ENCODE measurements at regions of chr13 and their contacts with region 1.

Region 1: DNA sequence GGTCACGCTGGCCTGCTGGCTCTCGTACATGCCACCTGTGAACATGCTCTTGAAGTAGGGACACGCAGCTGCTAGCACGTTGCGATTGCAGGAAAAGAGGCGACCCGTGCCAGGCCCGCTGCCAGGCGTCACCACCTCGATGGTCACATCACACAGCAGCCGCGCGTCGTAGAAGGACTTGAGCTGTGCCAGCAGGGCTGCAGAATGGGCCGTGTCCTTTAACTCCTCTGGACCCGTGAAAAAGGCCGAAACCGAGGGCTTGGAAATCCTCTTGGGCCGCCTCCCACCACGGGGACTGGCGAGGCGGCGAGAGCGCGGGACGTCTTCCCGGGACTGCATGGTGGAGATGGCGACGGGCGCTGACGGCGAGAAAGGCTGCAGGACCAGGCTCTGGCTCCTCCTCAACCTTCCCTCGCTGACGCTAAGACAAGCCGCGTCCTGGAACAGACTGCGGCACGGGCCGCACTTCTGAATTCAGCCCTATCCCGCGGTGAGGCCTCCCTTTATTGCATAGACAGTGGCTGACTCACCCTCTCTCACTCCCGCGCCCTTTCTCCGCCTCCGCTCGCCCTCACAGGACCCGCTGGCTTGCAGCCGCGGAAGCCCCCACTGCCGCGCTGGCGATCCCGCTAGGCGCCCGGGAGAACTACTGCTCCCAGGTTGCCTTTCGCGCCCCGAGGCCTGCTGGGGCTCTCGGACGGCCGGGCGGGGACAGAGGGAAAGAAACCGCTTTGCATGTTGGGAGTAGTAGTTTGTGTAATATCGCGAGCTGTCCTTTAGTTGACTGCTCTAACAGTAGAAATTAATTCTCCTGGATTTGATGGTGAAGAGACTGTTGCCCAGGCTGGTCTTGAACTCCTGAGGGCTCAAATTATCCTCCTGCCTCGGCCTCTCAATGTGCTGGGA is at the start of gene KBTBD7:
- DNase-seq: peak; percentile 87 to 92
- H3K4me3 ChIP-seq: peak within 1 kb of the TSS; percentile 49
- H3K4me1 ChIP-seq: peaks cover 3% of the 10 kb centered on the region; the same call in 1 of the 2 replicates
- H3K27me3 ChIP-seq: no peaks in the 10 kb centered on the region

Region 2: GRCh38 chr13:41132512-41133152 is 61.5 kb before region 1 on chr13 and contains the start of gene KBTBD6:
- in situ Hi-C with region 1: loop called (anchors 10 kb)
- DNase-seq: peak; percentile 95 to 96
- H3K4me3 ChIP-seq: peak within 1 kb of the TSS; percentile 54
- H3K4me1 ChIP-seq: peaks cover 14% of the 10 kb centered on the region
- H3K27me3 ChIP-seq: no peaks in the 10 kb centered on the region